ENCODE measurements at regions of chr21 and their contacts with region 1.

Region 1: DNA sequence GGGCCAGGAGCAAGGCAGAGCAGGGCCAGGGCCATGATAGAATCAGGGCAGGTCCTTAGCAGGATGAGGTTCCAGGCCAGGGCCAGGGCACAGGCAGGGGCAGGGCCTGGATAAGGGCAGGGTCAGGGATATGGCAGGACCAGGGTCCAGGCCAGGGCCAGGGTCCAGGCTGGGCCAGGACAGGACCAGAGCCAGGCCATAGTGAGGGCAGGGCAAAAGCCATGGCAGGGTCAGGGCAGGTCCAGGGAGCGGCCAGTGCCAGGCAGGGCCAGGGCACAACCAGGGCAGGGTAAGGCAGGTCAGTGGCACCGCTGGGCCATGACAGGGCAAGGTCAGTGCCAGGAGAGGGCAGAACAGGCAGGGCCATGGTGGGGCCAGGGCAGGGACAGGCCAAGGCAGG is 152.2 kb downstream of the LIPI start:
- DNase-seq: no peak
- H3K4me3 ChIP-seq: no peak overlapping the region
- H3K4me3 Mint-ChIP-seq: no peak overlapping the region
- H3K27ac ChIP-seq: no peak overlapping the region
- H3K27ac Mint-ChIP-seq: peak overlapping the region in 1 of 7 donors; percentile 25
- H3K4me1 ChIP-seq: no peaks in the 10 kb centered on the region
- H3K4me1 Mint-ChIP-seq: no peaks in the 10 kb centered on the region
- H3K27me3 ChIP-seq: no peaks in the 10 kb centered on the region
- H3K27me3 Mint-ChIP-seq: no peaks in the 10 kb centered on the region
- CTCF ChIP-seq: no peak

Region 2: GRCh38 chr21:14836950-14837349 is 778.4 kb after region 1 on chr21:
- intact Hi-C with region 1: loop called in 1 of 2 experiments (anchors 10 kb)
- DNase-seq: no peak
- H3K4me3 ChIP-seq: no peak overlapping the region
- H3K4me3 Mint-ChIP-seq: no peak overlapping the region
- H3K27ac ChIP-seq: no peak overlapping the region
- H3K27ac Mint-ChIP-seq: no peak overlapping the region
- H3K4me1 ChIP-seq: no peaks in the 10 kb centered on the region
- H3K4me1 Mint-ChIP-seq: peaks cover 5% of the 10 kb centered on the region
- H3K27me3 ChIP-seq: no peaks in the 10 kb centered on the region
- H3K27me3 Mint-ChIP-seq: peaks cover 0 to 2% (median 0%) of the 10 kb centered on the region in 3 donors
- CTCF ChIP-seq: no peak

Measured in CD14-positive monocyte (primary cell).